ENCODE measurements at regions of chr4 and their contacts with region 1.

Region 1: GRCh38 chr4:158094413-158095134 is 78.3 kb downstream of the GASK1B start:
- DNase-seq: peak in 4 of 5 donors; percentile 39 to 61 (median 46)
- H3K4me3 ChIP-seq: no peak overlapping the region
- H3K27ac ChIP-seq: peak overlapping the region in 1 of 2 donors; percentile 73
- H3K4me1 ChIP-seq: peaks cover 14% of the 10 kb centered on the region
- H3K27me3 ChIP-seq: no peaks in the 10 kb centered on the region
- CTCF ChIP-seq: no peak
- EP300 ChIP-seq: no peak
- POLR2A ChIP-seq: no peak

Region 2: DNA sequence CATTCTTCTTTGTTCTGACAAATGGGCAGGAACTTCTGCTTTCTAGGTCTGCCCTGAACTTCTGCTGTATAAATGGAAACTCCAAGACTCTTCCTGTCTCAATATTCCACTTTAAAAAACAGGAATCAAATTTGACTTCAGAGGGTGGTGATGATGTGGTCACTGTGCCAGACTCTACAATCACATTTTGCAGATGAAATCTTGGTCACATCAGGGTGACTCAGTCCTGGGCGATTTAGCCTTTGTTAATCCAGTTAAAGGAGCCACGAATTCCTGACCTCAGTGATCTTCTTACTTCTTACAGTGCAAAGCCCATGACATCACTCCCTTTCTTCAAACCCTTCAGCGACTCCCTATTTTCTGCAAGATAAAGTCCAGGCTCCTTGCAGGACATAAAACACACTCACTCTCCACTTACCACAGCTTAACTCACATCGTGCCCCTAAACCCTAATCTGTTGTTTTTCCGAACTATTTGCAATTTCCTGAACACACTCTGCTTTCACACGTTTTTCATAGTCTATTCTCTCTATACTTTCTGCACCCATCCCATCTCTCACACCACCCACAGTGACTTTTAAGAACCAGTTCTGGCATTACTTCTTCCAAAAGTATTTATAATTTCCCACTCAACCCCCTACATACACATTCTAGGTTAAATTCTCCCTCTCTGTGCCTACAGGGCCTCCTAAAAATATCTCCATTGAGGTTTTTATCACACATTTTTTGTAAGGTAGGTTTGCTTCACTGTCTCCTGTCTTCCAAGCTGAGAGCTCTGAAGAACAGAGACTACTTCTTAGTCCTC is 67.2 kb after region 1 on chr4:
- intact Hi-C with region 1: loop called in 2 of 4 experiments (anchors 5 to 10 kb)
- DNase-seq: no peak
- H3K4me3 ChIP-seq: no peak overlapping the region
- H3K27ac ChIP-seq: peak overlapping the region in 1 of 2 donors; percentile 10
- H3K4me1 ChIP-seq: peaks cover 19% of the 10 kb centered on the region
- H3K27me3 ChIP-seq: no peaks in the 10 kb centered on the region
- CTCF ChIP-seq: no peak
- EP300 ChIP-seq: no peak
- POLR2A ChIP-seq: no peak

Region 3: DNA sequence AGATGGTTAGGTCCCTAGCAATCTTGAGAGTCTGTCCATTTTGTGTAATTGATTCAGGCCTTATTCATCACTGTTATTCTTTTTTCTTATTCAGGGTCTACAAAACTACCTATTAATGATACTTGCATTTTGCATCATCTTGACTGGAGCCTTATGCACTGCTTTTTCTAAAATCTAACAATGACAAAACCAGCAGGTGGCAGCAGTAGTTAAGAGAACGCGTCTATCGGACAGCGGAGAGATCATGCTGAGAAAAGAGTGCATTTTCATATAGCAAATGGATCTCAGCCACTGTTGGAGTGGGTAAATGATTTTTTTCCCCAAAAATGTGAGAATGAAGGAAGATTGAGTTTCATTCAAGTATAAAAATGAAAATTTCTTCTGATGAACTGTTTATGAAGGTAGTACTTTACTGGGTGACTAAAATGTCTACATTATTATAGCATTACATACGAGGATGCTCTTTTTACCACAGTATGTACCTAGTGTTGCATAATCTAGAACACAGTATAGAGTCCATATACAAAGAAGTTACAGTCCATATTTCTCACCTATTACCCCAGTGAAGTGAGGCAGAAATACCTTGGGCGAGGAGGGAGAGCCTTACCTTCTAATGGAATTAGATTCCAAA is 158.9 kb after region 1 on chr4:
- intact Hi-C with region 1: no loop called
- DNase-seq: peak in 4 of 5 donors; percentile 39 to 62 (median 46)
- H3K4me3 ChIP-seq: no peak overlapping the region
- H3K27ac ChIP-seq: no peak overlapping the region
- H3K4me1 ChIP-seq: no peaks in the 10 kb centered on the region
- H3K27me3 ChIP-seq: no peaks in the 10 kb centered on the region
- CTCF ChIP-seq: peak in 2 of 3 donors; percentile 44 to 59
- EP300 ChIP-seq: no peak
- POLR2A ChIP-seq: no peak

Region 4: GRCh38 chr4:159498446-159499115 is 1404.0 kb after region 1 on chr4:
- intact Hi-C with region 1: no loop called
- DNase-seq: no peak
- H3K4me3 ChIP-seq: no peak overlapping the region
- H3K27ac ChIP-seq: no peak overlapping the region
- H3K4me1 ChIP-seq: no peaks in the 10 kb centered on the region
- H3K27me3 ChIP-seq: no peaks in the 10 kb centered on the region
- CTCF ChIP-seq: no peak
- EP300 ChIP-seq: no peak
- POLR2A ChIP-seq: no peak

Measured in ovary (tissue), 10 donors.